ENCODE measurements at regions of chr11 and their contacts with region 1.

Region 1: DNA sequence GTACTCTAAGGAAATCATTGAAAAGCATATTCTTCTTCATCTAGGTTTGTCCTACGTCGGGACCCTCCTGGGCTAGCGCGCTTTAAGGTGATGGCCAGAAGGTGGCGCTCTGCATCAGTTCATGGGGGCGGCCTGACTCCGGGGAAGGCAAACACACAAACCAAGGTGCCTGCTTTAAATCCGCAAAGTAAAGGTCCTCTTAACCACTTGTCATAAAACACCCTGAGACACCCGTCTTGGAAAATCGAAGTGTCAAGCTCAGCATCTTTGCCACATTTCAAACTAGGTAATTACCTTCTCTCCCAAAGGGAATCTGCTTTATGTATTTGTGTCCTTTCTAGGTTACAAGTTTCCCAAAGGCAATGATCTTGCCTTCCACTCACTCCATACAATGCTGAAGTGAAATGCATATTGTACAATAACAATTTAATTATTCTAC is 33.9 kb downstream of the LMO2 start:
- DNase-seq: peak; percentile 70 to 86
- H3K4me3 ChIP-seq: no peak overlapping the region
- H3K4me1 ChIP-seq: no peaks in the 10 kb centered on the region; the same call in 1 of the 2 replicates
- H3K27me3 ChIP-seq: peaks cover 8% of the 10 kb centered on the region; the same call in 1 of the 2 replicates

Region 2: DNA sequence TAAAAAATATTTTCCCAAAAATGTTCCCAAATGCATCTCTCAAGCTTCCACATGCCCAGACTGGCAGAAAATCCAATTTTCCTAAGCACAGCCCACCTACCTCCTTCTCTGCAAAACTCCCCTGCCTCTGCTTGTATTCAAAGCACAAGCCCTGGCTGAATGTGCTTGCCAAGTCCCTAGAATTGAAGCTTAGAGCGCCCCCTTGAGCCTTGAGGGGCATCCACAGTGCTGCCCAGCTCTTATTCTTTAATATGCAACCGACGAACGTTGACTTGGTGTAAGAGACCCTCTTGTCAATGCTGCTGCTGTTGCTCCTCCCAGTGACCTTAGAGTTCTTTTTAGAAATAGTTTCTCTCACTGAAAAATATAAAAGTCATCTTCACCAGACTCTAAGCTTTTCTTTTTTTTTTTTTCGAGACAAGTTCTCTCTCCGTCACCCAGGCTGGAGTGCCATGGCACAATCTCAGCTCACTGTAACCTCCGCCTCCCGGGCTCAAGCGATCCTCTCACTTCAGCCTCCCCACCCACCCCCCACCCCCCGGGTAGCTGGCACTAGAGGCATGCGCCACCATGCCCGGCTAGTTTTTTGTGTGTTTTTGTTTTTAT is 130.1 kb after region 1 on chr11:
- in situ Hi-C with region 1: loop called (anchors 10 kb)
- DNase-seq: peak; percentile 74 to 88
- H3K4me3 ChIP-seq: no peak overlapping the region
- H3K4me1 ChIP-seq: no peaks in the 10 kb centered on the region
- H3K27me3 ChIP-seq: no peaks in the 10 kb centered on the region

Region 3: GRCh38 chr11:34501500-34501899 is 643.5 kb after region 1 on chr11:
- in situ Hi-C with region 1: no loop called
- DNase-seq: no peak
- H3K4me3 ChIP-seq: no peak overlapping the region
- H3K4me1 ChIP-seq: no peaks in the 10 kb centered on the region; the same call in 1 of the 2 replicates
- H3K27me3 ChIP-seq: no peaks in the 10 kb centered on the region

Measured in HAP-1 (cell line).